ENCODE measurements at regions of chr2 and their contacts with region 1.

Region 1: GRCh38 chr2:202583709-202584219 is 51.0 kb upstream of the FAM117B start:
- DNase-seq: no peak
- ATAC-seq: no peak

Region 2: GRCh38 chr2:202643012-202643858 is 59.5 kb after region 1 on chr2:
- intact Hi-C with region 1: loop called (anchors 5 kb)
- DNase-seq: no peak
- ATAC-seq: no peak

Region 3: GRCh38 chr2:202671317-202672035 is 87.7 kb after region 1 on chr2:
- intact Hi-C with region 1: no loop called
- DNase-seq: no peak
- ATAC-seq: no peak